Sigmoid colon (tissue), 7 donors: ENCODE measurements at regions of chr10 and their contacts with region 1.

Region 1: DNA sequence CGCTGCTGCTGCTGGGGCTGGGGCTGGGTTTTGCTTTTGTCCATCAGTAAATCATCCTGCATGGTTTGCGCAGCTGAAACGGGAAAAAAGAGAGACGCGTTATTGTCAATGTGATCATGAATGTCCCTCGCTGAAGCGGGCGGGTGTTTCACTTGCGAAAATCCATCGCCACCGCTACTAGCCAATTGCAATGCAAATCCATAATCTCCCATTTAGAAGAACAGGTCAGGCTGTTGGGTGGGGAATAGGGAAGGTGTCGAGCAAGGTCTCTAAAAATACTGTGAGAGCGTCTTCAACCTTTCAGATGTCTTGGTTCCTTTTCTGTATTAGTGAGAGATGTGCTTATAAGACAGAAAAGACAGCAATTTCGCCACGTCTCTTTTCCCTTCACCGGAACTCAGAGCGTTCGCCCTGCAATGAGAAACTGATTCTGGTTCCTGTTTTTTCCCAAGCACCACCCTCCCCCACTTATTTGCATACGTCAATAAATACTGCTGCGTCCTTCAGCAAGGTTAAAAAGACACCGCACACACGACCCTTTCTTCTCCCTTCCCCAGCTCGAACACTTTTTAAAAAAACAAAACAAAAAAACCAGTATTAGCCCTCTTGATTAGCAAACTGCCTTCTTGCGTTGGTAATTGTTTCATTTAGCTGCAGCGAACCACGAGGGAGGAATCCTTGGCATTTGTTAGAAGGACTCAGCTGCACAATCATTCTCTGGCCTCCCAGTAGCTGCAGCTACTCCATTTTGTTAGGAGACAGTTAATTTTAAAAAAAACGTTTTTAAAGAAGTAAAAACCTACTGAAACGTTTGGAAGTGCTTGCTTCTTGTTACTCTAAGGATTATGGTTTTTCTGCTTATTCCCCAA is 50.4 kb downstream of the CPEB3 start:
- DNase-seq: peak; percentile 81
- H3K4me3 ChIP-seq: peak overlapping the region; percentile 72 to 82 (median 77)
- H3K27ac ChIP-seq: peak overlapping the region; percentile 88 to 94 (median 89)
- H3K4me1 ChIP-seq: peaks cover 0 to 56% (median 37%) of the 10 kb centered on the region in 4 donors
- H3K27me3 ChIP-seq: no peaks in the 10 kb centered on the region
- CTCF ChIP-seq: no peak
- EP300 ChIP-seq: no peak
- POLR2A ChIP-seq: peak in 1 of 2 donors; percentile 44

Region 2: DNA sequence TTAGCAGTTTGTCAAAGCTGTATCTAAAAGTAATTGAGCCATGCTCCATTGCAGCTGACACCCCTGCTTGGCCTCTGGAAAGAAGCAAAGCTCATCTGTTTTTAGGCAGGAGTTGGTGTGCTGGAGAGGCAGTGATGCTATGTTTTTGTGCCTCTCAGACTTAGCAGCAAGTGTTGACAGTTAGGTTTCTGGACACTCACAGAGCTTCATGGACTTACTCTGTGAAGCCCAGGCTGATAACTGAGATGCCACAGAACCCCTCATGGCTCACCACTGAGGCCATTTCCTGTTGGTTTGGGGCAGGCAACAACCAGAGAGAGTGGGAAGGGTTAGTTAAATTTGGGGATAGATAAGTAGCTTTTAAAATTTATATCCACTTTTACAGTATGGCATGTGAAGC is 257.1 kb before region 1 on chr10:
- intact Hi-C with region 1: no loop called
- DNase-seq: no peak
- H3K4me3 ChIP-seq: no peak overlapping the region
- H3K27ac ChIP-seq: no peak overlapping the region
- H3K4me1 ChIP-seq: no peaks in the 10 kb centered on the region
- H3K27me3 ChIP-seq: no peaks in the 10 kb centered on the region
- CTCF ChIP-seq: no peak
- EP300 ChIP-seq: no peak
- POLR2A ChIP-seq: no peak

Region 3: DNA sequence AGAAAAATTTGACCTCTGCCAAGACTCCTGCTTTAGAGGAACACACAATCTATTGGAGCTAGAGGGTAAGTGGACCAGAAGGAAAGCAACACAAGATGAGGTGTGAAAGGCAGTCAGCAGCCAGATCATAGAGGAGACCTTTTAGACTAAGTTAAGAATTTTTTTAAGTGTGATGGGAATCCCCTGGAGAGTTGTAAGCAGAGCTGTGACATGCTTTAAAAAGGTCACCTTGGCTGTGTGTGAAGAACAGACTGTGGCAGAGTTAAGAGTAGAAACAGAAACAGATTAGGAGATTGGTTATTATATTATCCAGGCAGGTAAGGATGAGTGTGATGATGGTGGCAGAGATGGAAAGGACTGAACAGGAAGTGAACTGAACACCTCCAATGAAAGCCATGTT is 26.8 kb after region 1 on chr10:
- intact Hi-C with region 1: no loop called
- DNase-seq: no peak
- H3K4me3 ChIP-seq: no peak overlapping the region
- H3K27ac ChIP-seq: peak overlapping the region; percentile 31 to 64 (median 62)
- H3K4me1 ChIP-seq: peaks cover 0 to 27% (median 23%) of the 10 kb centered on the region in 4 donors
- H3K27me3 ChIP-seq: no peaks in the 10 kb centered on the region
- CTCF ChIP-seq: no peak
- EP300 ChIP-seq: no peak
- POLR2A ChIP-seq: no peak

Region 4: DNA sequence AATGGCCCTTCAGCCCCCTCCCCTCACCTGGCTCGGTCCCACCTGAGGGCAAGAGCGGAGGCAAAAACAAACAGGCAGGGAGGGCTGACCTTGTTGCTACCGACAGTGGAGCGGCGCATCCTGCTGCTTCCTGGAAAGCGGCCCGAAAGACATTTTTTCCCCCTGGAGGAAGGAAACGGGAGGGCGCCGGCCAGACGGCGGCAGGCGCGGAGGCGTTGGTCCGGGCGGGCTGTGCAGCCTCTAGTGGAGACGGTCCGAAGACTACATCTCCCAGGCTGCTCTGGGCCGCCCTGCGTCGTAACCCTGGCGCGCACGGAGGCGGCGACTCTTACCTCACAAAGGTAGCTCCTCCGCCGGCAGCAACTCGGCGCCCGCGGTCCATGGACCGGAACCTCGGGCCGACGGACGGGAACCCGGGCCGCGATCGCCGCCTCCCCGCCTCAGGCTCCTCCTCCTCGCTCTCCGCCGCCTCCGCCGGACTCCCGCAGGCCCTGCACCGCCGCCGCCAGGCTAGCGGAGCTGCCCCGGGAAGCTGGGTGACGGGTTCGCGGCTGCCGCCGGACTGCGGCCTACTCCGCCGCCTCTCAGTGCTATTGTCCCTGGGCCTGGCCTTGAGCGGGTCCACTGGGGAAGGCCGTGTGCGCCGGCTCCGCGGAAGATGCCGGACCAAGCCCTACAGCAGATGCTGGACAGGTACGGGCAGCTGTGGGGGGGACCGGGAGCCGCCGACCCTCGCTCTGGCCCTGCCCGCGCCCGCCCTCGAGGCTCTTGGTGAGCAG is 50.5 kb after region 1 on chr10 and contains the starts of genes CPEB3 and MARCHF5:
- intact Hi-C with region 1: loop called (anchors 1 kb)
- DNase-seq: peak; percentile 98
- H3K4me3 ChIP-seq: peak within 1 kb of the TSS; percentile 58 to 99 (median 86)
- H3K27ac ChIP-seq: peak within 1 kb of the TSS; percentile 82 to 99 (median 94)
- H3K4me1 ChIP-seq: peaks cover 0 to 17% (median 15%) of the 10 kb centered on the region in 4 donors
- H3K27me3 ChIP-seq: no peaks in the 10 kb centered on the region
- CTCF ChIP-seq: peak; percentile 77 to 95 (median 86)
- EP300 ChIP-seq: no peak
- POLR2A ChIP-seq: peak; percentile 66 to 72
- total RNA-seq, gene CPEB3: 6.6 to 7.7 (median 7.3) TPM
- total RNA-seq, gene MARCHF5: 9.5 to 23.5 (median 16.7) TPM